ENCODE measurements at regions of chr2 and their contacts with region 1.

Region 1: DNA sequence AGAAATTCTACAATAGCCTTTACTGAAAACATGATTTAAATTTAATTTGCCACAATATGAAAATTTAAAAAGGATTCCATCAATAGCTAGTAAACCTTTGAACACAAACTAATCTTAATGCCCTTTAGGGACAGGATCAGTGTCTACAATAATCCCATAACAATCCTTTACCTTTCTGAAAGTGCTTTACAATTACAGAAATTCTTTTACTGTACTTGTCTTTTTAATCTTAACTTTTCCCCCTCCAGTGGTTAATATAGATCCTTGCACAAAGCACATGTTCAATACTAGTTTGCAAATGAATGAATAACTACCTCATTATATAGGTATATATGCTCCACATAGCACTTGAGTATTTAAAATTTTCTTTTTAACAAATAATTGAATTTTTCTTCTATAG is 122.6 kb downstream of the PLEKHA3 start:
- DNase-seq: no peak
- ATAC-seq: no peak
- H3K4me3 ChIP-seq: no peak overlapping the region
- H3K27ac ChIP-seq: no peak overlapping the region
- H3K4me1 ChIP-seq: peaks cover 0 to 15% of the 10 kb centered on the region in 2 donors
- H3K27me3 ChIP-seq: no peaks in the 10 kb centered on the region
- CTCF ChIP-seq: no peak
- POLR2A ChIP-seq: no peak

Region 2: DNA sequence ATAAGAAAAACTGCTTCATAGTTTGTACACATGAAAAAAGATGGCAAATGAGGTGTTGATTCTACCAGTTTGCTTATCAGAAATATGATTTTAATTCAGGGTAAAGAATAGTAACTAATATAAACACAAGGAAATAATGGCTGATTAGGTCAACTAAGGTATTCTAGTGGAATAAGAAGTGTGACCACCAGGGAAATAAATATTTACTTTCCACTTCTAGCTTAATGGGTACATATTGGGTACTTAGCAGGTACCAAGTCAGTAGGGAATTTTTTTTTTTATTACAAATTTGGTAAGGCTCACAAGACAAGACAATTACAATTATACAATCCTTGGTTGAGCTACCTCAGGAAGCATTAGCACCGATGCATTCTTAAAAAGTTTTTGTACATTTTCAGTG is 13.1 kb after region 1 on chr2:
- in situ Hi-C with region 1: no loop called
- intact Hi-C with region 1: loop called (anchors 2 kb)
- DNase-seq: no peak
- ATAC-seq: no peak
- H3K4me3 ChIP-seq: no peak overlapping the region
- H3K27ac ChIP-seq: peak overlapping the region in 1 of 4 donors; percentile 79
- H3K4me1 ChIP-seq: peaks cover 22 to 28% of the 10 kb centered on the region in 2 donors
- H3K27me3 ChIP-seq: no peaks in the 10 kb centered on the region
- CTCF ChIP-seq: no peak
- POLR2A ChIP-seq: no peak